Gastrocnemius medialis (tissue), 4 donors: ENCODE measurements at regions of chr9 and their contacts with region 1.

Region 1: DNA sequence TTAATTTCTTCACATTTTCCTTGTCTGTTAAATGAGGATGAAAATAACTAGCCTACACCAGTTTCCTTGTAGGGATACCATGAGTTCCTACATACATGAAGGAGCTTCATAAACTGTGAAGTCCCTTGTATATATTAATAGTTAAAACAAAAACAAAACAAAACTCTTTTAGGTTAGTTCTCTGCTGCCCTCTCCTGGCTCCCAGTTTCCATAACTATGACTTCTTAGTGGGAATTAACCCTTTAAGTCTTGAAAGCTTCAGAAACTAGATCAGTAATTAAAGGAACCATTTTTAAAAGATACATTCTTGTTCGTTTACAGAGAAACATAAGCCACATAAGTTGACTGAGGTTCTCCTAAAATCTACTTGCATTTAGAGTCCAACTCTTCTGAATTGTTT is 500.0 kb upstream of the C9orf72 start:
- DNase-seq: no peak
- ATAC-seq: no peak
- H3K4me3 ChIP-seq: no peak overlapping the region
- H3K27ac ChIP-seq: no peak overlapping the region
- H3K4me1 ChIP-seq: no peaks in the 10 kb centered on the region
- H3K27me3 ChIP-seq: no peaks in the 10 kb centered on the region
- CTCF ChIP-seq: peak in 1 of 5 experiments; percentile 10
- POLR2A ChIP-seq: no peak

Region 2: DNA sequence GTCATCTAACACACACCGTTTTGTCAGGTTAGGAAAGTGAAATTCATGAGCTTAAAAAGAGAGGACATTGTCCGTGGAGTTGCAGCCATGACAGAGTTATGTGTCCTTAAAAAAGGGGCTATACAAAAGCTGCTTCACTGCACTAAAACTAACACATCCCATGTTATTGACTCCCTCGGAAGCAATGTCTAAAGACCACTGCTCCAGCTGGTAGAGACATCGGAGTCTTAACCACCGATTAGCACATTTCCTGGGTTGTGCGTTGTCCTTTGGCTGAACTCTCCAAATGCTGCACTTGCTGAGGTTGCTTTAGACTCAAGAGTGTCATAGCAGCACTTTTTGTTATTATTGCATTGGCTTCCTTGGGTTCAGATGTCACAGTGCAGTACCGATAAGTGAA is 371.7 kb before region 1 on chr9:
- in situ Hi-C with region 1: loop called in 1 of 4 experiments (anchors 25 kb)
- intact Hi-C with region 1: no loop called
- DNase-seq: peak; percentile 9 to 28
- ATAC-seq: peak; percentile 53 to 54
- H3K4me3 ChIP-seq: no peak overlapping the region
- H3K27ac ChIP-seq: no peak overlapping the region
- H3K4me1 ChIP-seq: peaks cover 0 to 6% of the 10 kb centered on the region in 2 donors
- H3K27me3 ChIP-seq: no peaks in the 10 kb centered on the region
- CTCF ChIP-seq: no peak
- POLR2A ChIP-seq: no peak